HEK293T (cell line): ENCODE measurements at regions of chr11 and their contacts with region 1.

Region 1: GRCh38 chr11:47778878-47779483 is 11.8 kb upstream of the FNBP4 start:
- DNase-seq: no peak

Region 2: DNA sequence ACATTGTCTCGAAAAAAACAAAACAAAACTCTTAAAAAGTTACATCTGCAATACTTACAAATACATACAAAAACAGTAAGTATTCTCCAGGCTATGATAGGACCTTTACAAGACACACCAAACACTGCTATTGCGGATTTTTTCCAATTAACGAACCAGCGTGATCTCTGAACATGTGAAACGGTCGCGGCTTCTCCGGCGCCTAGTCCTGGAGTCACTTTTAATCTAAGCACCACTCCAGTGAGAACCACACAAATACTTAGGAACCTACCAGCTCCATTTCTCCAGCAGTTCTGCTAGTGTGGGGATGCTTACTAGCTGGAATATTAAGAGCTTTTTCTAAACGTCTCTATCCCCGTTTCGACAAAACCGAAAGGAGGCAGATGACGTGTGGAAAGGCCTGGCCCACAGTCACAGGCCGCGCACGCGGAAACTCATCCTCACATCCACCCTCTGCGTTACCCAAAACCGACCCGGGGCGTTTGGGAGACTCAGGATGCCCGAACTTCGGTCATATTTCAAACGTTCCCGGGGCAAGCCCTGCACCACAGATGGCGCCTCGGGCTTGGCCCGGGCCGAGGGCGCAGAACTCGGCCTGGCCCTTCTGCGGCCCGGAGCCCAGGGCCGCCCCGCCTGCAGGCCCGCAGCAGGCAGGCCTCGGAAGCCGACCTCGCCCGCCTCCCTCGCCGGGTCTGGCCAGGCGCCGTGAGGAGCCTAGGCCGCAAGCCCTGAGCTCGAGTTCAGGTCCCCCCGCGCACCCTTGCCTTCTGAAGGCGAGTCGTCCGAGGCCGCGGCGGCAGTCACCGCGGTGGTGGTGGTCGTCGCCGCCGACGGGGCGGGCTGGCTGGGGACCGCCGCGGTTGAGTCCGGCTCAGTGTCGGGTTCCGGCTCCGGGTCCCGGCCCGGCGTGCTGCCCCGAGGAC is 12.4 kb before region 1 on chr11:
- CTCF ChIA-PET with region 1: no interaction called
- POLR2A ChIA-PET with region 1: interaction called, 10 read pairs
- DNase-seq: no peak

Region 3: GRCh38 chr11:47797633-47798032 is 18.7 kb after region 1 on chr11:
- CTCF ChIA-PET with region 1: no interaction called
- POLR2A ChIA-PET with region 1: no interaction called
- DNase-seq: no peak